Mammary epithelial cell (primary cell): ENCODE measurements at regions of chr1 and their contacts with region 1.

Region 1: GRCh38 chr1:8004803-8005554 is 21.1 kb downstream of the ERRFI1 start:
- DNase-seq: peak; percentile 99
- H3K4me3 ChIP-seq: no peak overlapping the region
- H3K27ac ChIP-seq: peak overlapping the region; percentile 91
- H3K4me1 ChIP-seq: peaks cover 39% of the 10 kb centered on the region
- H3K27me3 ChIP-seq: no peaks in the 10 kb centered on the region
- CTCF ChIP-seq: no peak

Region 2: DNA sequence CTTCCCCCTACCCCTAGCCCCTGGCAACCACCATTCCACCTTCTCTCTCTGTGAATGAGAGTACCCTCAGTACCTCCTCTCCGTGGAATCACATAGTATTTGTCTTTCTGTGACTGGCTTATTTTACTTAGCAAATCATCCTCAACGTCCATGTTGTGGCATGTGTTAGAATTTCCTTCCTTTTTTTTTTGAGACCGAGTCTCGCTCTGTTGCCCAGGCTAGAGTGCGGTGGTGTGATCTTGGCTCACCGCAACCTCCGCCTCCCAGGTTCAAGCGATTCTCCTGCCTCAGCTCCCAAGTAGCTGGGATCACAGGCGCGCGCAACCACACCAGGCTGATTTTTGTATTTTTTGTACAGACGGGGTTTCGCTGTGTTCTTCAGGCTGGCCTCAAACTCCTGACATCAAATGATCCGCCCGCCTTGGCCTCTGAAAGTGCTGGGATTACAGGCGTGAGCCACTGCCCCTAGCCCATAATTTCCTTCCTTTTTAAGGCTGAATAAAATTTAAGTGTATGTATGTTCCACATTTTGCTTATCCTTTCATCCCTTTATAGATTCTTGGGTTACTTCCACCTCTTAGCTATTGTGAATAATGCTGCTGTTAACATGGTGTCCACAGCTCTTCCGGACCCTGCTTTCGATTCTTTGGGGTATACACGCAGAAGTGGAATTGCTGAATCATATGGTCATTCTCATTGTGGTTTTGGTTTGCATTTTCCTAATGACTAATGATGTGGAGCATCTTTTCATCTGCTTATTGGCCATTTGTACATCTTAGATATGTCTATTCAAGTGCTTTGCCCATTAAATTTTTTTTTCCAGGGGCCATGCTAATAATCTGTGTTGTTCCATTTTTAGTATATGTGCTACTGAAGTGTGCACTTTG is 11.1 kb before region 1 on chr1:
- CTCF ChIA-PET with region 1: no interaction called
- dilution Hi-C with region 1: no loop called
- in situ Hi-C with region 1: no loop called
- intact Hi-C with region 1: loop called (anchors 2 kb)
- DNase-seq: no peak
- H3K4me3 ChIP-seq: no peak overlapping the region
- H3K27ac ChIP-seq: no peak overlapping the region
- H3K4me1 ChIP-seq: peaks cover 3% of the 10 kb centered on the region
- H3K27me3 ChIP-seq: no peaks in the 10 kb centered on the region
- CTCF ChIP-seq: no peak

Region 3: DNA sequence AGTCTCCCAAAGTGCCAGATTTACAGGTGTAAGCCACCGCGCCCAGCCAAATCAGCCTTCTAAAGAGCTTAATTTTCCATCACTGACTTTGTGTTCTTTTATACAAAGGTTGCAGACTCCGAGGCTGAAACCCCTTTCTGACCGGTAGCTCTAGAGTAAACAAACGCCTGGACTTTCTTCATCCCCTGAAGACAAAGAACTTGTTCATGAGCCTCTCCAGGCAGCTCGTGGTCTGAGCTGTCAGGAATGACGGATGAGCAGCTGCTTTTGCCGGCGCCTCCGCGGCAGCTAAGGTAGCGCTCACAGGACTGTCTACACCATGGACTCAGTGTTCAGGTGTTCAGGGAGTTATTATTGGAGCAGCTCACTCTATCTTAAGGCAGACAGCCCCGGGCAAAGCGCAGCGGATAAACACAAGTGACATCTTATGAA is 149.7 kb after region 1 on chr1:
- CTCF ChIA-PET with region 1: no interaction called
- dilution Hi-C with region 1: no loop called
- in situ Hi-C with region 1: no loop called
- intact Hi-C with region 1: no loop called
- DNase-seq: peak; percentile 96
- H3K4me3 ChIP-seq: no peak overlapping the region
- H3K27ac ChIP-seq: peak overlapping the region; percentile 71
- H3K4me1 ChIP-seq: peaks cover 23% of the 10 kb centered on the region
- H3K27me3 ChIP-seq: no peaks in the 10 kb centered on the region
- CTCF ChIP-seq: no peak